ENCODE measurements at regions of chr14 and their contacts with region 1.

Region 1: DNA sequence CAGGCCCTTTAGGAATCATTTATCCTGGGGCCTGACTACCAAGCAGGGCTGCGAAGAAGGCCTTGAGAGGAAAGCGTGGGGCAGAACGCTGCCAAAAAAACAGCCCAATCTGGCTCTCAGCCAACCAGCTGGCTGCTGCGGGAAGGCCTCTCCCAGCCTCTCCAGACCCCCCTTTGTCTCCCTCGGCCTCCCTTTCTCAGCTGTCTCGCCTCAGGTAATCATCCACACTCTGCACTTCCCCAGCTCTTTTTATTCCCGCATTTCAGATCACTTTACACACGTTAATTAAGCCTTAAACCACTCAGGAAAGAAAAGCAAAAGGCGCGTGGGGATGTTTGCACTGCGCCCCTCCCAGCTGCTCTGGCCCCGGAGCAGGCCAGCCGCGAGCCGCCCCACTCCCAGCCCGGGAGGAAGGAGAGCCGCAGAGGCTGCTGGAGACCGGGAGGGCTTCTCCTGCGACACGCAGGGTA is 208.2 kb upstream of the FOXN3 start:
- DNase-seq: no peak
- ATAC-seq: peak in 1 of 2 donors; percentile 32
- H3K4me3 ChIP-seq: peak overlapping the region in 1 of 4 donors; percentile 10
- H3K27ac ChIP-seq: peak overlapping the region; percentile 8 to 60 (median 49)
- H3K4me1 ChIP-seq: peaks cover 2 to 16% of the 10 kb centered on the region in 2 donors
- H3K27me3 ChIP-seq: no peaks in the 10 kb centered on the region
- CTCF ChIP-seq: no peak
- POLR2A ChIP-seq: no peak

Region 2: GRCh38 chr14:89660166-89660565 is 34.9 kb after region 1 on chr14:
- in situ Hi-C with region 1: no loop called
- intact Hi-C with region 1: loop called (anchors 2 kb)
- DNase-seq: peak; percentile 51 to 52
- ATAC-seq: peak; percentile 96 to 97
- H3K4me3 ChIP-seq: peak overlapping the region; percentile 12 to 36 (median 24)
- H3K27ac ChIP-seq: peak overlapping the region; percentile 73 to 87 (median 80)
- H3K4me1 ChIP-seq: peaks cover 14 to 18% of the 10 kb centered on the region in 2 donors
- H3K27me3 ChIP-seq: no peaks in the 10 kb centered on the region
- CTCF ChIP-seq: no peak
- POLR2A ChIP-seq: no peak

Region 3: GRCh38 chr14:90475298-90475697 is 850.0 kb after region 1 on chr14:
- in situ Hi-C with region 1: no loop called
- intact Hi-C with region 1: no loop called
- DNase-seq: no peak
- ATAC-seq: no peak
- H3K4me3 ChIP-seq: no peak overlapping the region
- H3K27ac ChIP-seq: no peak overlapping the region
- H3K4me1 ChIP-seq: no peaks in the 10 kb centered on the region
- H3K27me3 ChIP-seq: no peaks in the 10 kb centered on the region
- CTCF ChIP-seq: no peak
- POLR2A ChIP-seq: no peak

Measured in gastrocnemius medialis (tissue), 4 donors.